ENCODE measurements at regions of chr3 and their contacts with region 1.

Region 1: DNA sequence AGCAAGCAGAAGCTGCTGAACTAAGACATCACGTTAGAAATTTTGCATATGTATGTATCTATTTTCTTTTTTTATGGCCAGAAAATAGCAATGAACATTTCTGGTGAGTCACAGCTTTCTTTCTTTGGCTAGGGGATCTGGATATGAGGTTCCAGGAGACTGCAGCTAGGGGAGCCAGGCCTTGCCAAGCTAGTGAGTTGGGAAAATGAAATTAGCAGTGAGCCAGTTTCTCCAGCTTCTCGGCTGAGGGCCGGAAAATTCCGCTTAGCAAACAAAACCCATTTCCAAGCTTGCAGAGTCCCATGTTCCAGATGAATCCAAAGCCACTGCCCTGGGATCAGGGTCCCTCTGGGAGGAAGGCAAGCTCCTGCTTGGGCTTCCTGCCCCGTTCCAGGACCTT is 137.6 kb downstream of the SRGAP3 start:
- DNase-seq: no peak
- H3K4me3 ChIP-seq: no peak overlapping the region
- H3K27ac ChIP-seq: no peak overlapping the region
- H3K4me1 ChIP-seq: peaks cover 0 to 19% (median 10%) of the 10 kb centered on the region in 4 donors
- H3K27me3 ChIP-seq: no peaks in the 10 kb centered on the region
- CTCF ChIP-seq: no peak
- EP300 ChIP-seq: no peak
- POLR2A ChIP-seq: no peak

Region 2: GRCh38 chr3:8970971-8971589 is 140.8 kb before region 1 on chr3:
- intact Hi-C with region 1: no loop called
- DNase-seq: peak; percentile 92
- H3K4me3 ChIP-seq: no peak overlapping the region
- H3K27ac ChIP-seq: no peak overlapping the region
- H3K4me1 ChIP-seq: no peaks in the 10 kb centered on the region
- H3K27me3 ChIP-seq: peaks cover 0 to 28% (median 0%) of the 10 kb centered on the region in 4 donors
- CTCF ChIP-seq: peak; percentile 96 to 99 (median 98)
- EP300 ChIP-seq: no peak
- POLR2A ChIP-seq: no peak

Region 3: GRCh38 chr3:8987645-8988383 is 124.1 kb before region 1 on chr3:
- intact Hi-C with region 1: no loop called
- DNase-seq: no peak
- H3K4me3 ChIP-seq: no peak overlapping the region
- H3K27ac ChIP-seq: no peak overlapping the region
- H3K4me1 ChIP-seq: peaks cover 0 to 9% (median 0%) of the 10 kb centered on the region in 4 donors
- H3K27me3 ChIP-seq: no peaks in the 10 kb centered on the region
- CTCF ChIP-seq: peak; percentile 65 to 75 (median 67)
- EP300 ChIP-seq: no peak
- POLR2A ChIP-seq: no peak

Region 4: GRCh38 chr3:9088441-9089353 is 23.2 kb before region 1 on chr3:
- intact Hi-C with region 1: loop called (anchors 2 kb)
- DNase-seq: no peak
- H3K4me3 ChIP-seq: no peak overlapping the region
- H3K27ac ChIP-seq: peak overlapping the region in 1 of 4 donors; percentile 5
- H3K4me1 ChIP-seq: peaks cover 0 to 13% (median 11%) of the 10 kb centered on the region in 4 donors
- H3K27me3 ChIP-seq: no peaks in the 10 kb centered on the region
- CTCF ChIP-seq: no peak
- EP300 ChIP-seq: no peak
- POLR2A ChIP-seq: no peak

Region 5: DNA sequence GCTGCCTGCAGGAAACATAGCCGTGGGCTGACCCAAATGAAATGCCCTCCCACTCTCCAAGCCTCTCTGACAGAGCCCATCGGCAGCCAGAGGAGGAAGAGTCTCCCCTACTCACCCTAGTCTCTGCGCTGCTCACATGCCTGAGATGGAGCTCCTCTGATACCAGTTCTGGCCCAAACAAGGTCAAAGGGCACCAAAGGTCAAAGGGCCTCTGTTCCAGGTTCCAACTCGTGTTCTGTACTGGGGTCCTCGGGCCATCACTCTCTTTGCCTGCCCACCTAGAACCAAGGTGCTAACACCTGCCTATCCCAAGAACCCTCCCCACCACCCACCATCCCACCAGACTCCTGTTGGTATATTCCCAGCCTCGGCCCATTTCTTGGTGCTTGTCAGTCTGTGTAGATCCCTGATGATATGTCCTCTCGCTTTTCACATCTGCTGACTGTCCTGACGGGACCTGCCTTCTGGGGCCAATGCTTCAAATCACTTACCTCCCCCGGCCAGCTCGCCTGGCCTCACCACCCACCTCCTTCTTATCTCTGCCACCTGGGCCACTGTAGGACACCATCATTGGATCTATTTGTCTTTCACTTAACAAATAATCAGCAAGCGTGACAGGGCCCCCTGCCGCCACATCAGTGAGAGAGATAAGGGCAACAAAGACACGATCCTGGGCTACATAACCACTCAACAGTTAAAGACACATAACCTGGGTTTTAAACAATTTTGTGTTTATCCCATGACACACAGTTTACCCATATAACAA is 47.2 kb after region 1 on chr3:
- intact Hi-C with region 1: no loop called
- DNase-seq: no peak
- H3K4me3 ChIP-seq: no peak overlapping the region
- H3K27ac ChIP-seq: no peak overlapping the region
- H3K4me1 ChIP-seq: peaks cover 0 to 10% (median 7%) of the 10 kb centered on the region in 4 donors
- H3K27me3 ChIP-seq: no peaks in the 10 kb centered on the region
- CTCF ChIP-seq: no peak
- EP300 ChIP-seq: no peak
- POLR2A ChIP-seq: no peak